ENCODE measurements at regions of chr17 and their contacts with region 1.

Region 1: DNA sequence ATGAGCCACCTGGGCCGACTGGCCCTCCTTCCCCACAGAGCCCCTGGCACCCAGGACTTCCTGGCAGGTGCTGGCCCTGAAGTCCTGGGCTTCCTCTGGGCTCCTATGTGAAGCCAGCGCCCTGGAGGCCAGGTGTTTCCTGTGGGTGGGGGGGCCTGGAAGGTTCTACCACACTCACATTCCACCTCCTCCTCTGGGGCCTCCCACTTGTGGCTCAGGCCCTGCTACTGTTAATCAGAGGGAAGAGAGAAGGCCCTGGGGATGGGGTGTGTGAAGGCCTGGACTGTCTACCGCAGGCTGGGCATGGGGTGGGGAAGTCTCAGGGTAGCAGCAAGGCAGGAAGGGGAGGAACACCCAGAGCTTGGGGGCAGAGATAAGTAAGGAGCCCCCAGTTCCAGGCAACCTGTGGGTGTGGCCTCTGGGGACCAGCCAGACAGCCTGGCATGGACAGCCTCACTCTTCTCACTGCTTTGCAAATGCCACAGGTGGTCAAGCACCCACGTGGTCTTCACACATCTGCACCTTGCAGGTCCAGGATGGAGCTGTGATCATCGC is 111.9 kb upstream of the TNRC6C start:
- DNase-seq: no peak
- H3K4me3 ChIP-seq: no peak overlapping the region
- CTCF ChIP-seq: no peak
- POLR2A ChIP-seq: no peak

Region 2: GRCh38 chr17:77606865-77607210 is 239.8 kb before region 1 on chr17:
- intact Hi-C with region 1: loop called (anchors 1 kb)
- DNase-seq: no peak
- H3K4me3 ChIP-seq: no peak overlapping the region
- CTCF ChIP-seq: no peak
- POLR2A ChIP-seq: no peak

Region 3: DNA sequence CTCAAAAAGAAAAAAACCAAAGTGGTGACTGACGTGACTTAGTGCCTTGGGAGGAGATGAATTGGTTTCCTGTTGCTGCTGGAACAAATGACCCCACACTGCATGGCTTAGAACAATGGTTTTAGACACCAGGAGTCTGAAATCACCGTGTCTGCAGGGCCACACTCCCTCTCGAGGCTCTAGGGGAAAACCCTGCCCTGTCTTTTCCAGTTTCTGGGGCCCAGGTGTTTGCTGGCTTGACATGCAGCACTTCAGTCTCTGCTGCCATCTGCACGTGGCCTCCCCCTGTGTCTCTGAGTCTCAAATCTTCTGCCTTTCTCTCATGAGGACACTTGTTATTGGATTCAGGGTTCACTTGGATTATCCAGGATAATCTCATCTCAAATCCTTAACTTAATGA is 211.9 kb before region 1 on chr17:
- intact Hi-C with region 1: no loop called
- DNase-seq: peak in 1 of 2 donors; percentile 13
- H3K4me3 ChIP-seq: no peak overlapping the region
- CTCF ChIP-seq: no peak
- POLR2A ChIP-seq: no peak

Region 4: GRCh38 chr17:77746896-77747554 is 99.6 kb before region 1 on chr17:
- intact Hi-C with region 1: no loop called
- DNase-seq: no peak
- H3K4me3 ChIP-seq: no peak overlapping the region
- CTCF ChIP-seq: no peak
- POLR2A ChIP-seq: no peak

Region 5: DNA sequence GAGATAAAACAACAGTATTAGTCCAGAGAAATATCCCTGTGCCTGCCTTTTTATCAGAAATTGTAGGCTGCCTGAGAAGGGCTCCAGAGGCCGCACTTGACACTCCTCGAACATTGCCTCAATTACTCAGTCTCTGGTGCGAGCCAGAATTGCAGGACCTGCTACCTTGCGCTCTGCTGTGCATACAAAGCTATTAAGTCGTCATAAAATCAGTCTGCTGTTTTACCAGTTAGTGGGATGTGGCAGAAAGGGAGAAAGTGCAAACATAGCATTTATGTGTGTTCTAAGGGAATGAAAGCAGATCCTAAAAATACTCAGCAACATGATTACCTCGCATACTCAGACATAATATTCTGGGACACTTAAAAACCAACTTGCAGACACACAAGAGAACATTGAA is 211.4 kb after region 1 on chr17:
- intact Hi-C with region 1: no loop called
- DNase-seq: no peak
- H3K4me3 ChIP-seq: no peak overlapping the region
- CTCF ChIP-seq: no peak
- POLR2A ChIP-seq: no peak

Measured in lower leg skin (tissue), 4 donors.